ENCODE measurements at regions of chr5 and their contacts with region 1.

Region 1: DNA sequence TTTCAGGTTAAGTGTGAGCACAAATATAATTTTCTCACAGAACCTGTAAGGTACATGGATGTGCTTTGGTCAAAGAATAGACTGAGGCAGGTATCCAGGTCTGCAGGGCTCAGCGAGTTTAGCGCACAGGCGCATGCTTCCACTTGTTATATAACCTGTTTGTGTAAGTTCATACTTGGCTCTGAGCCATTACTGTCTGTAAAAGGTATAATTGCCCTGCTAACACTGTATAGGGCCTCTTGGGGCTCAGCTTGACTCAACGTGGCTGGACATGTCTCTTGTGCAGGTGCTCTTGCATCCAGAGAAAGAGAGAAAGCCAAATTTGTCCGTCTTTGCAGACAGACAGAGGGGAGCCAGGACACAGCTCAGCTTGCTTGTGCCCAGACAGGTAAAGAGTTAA is 759.6 kb downstream of the MTRR start:
- DNase-seq: no peak
- ATAC-seq: no peak
- H3K4me3 ChIP-seq: no peak overlapping the region
- H3K27ac ChIP-seq: no peak overlapping the region
- H3K4me1 ChIP-seq: no peaks in the 10 kb centered on the region
- H3K27me3 ChIP-seq: no peaks in the 10 kb centered on the region
- CTCF ChIP-seq: no peak

Region 2: GRCh38 chr5:8729437-8729836 is 100.9 kb after region 1 on chr5:
- CTCF ChIA-PET with region 1: no interaction called
- POLR2A ChIA-PET with region 1: no interaction called
- intact Hi-C with region 1: loop called (anchors 10 kb)
- DNase-seq: peak; percentile 84
- ATAC-seq: peak; percentile 77
- H3K4me3 ChIP-seq: no peak overlapping the region; the same call in 1 of the 2 replicates
- H3K27ac ChIP-seq: peak overlapping the region; percentile 71
- H3K4me1 ChIP-seq: peaks cover 33% of the 10 kb centered on the region
- H3K27me3 ChIP-seq: no peaks in the 10 kb centered on the region
- CTCF ChIP-seq: no peak